Activated CD4-positive, alpha-beta T cell treated with anti-CD3 and anti-CD28 coated beads for 36 hours (primary cell): ENCODE measurements at regions of chr3 and their contacts with region 1.

Region 1: GRCh38 chr3:13461169-13462158 is 18.6 kb upstream of the HDAC11 start:
- DNase-seq: peak; percentile 91
- ATAC-seq: peak; percentile 99
- H3K4me3 Mint-ChIP-seq: no peak overlapping the region
- H3K27ac Mint-ChIP-seq: no peak overlapping the region
- H3K4me1 Mint-ChIP-seq: peaks cover 3% of the 10 kb centered on the region
- H3K27me3 Mint-ChIP-seq: no peaks in the 10 kb centered on the region

Region 2: DNA sequence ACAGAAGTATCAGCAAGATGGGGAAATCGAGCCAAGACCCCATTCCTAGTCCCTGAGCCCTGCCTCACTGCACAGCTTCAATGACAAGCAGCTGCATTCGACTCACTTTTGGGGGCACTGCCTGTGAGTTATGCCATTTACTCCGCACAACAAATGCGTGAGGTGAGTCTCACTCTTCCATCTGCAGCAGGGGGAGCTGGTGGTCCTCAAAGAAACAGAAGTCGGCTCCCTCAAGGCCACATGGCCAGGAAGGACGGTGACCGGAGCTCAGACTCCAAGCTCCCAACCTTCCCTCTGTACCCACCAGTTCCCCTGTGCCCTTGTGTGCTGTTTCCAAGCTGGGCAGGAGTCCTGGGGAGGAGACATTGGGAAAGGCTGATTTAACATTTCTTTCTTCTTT is 260.5 kb before region 1 on chr3:
- CTCF ChIA-PET with region 1: no interaction called
- POLR2A ChIA-PET with region 1: no interaction called
- intact Hi-C with region 1: loop called in 1 of 2 experiments (anchors 1 kb)
- DNase-seq: peak; percentile 14
- ATAC-seq: no peak
- H3K4me3 Mint-ChIP-seq: no peak overlapping the region
- H3K27ac Mint-ChIP-seq: no peak overlapping the region
- H3K4me1 Mint-ChIP-seq: peaks cover 7% of the 10 kb centered on the region
- H3K27me3 Mint-ChIP-seq: peaks cover 28% of the 10 kb centered on the region

Region 3: DNA sequence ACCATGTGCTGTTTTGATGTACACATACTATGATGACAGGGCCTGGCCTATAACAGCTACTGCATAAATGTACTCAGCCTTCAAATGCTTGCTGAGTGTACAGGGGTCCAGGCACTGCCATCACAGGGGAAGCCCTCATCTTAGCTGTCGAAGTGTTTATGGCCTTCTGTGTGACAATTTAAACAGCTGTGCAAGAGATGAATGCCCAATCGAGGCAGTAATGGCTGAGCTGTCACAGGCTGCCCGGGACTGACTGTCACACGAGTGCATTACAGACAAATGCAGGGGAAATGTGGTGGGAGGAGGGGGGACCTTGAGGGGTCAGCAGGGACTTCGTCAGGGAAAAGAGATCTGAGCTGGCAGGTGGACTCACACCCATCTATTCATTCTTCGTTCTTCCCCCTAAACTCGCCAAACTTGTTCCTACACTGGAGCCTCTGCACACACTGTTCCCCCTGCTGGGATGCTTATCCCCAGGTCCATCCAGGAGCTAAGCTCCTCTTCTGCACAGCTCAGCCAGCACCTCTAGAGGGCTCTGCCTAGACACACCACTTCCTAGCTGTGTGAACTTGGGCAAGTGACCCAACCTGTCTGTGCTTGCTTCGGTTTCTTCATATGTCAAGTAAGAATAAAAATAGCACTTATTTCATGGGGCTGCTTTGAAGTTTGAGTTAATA is 232.1 kb before region 1 on chr3:
- CTCF ChIA-PET with region 1: no interaction called
- POLR2A ChIA-PET with region 1: no interaction called
- intact Hi-C with region 1: loop called in 1 of 2 experiments (anchors 1 kb)
- DNase-seq: peak; percentile 36
- ATAC-seq: peak; percentile 80
- H3K4me3 Mint-ChIP-seq: no peak overlapping the region
- H3K27ac Mint-ChIP-seq: no peak overlapping the region
- H3K4me1 Mint-ChIP-seq: peaks cover 9% of the 10 kb centered on the region
- H3K27me3 Mint-ChIP-seq: peaks cover 5% of the 10 kb centered on the region

Region 4: DNA sequence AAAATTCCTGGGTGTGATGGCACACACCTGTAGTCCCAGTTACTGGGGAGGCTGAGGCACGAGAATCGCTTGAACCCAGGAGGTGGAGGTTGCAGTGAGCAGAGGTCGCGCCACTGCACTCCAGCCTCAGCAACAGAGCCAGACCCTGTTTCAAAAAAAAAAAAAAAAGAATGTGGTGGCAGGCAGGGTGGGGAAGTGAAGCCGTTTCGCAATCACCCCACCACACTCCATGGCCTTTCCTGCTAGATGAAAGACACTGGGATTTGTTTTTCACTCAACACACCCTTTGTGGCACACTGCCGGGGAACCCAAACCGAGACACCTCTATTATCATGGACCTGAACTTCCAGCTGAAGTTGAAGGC is 215.9 kb before region 1 on chr3:
- CTCF ChIA-PET with region 1: no interaction called
- POLR2A ChIA-PET with region 1: no interaction called
- intact Hi-C with region 1: no loop called
- DNase-seq: no peak
- ATAC-seq: no peak
- H3K4me3 Mint-ChIP-seq: no peak overlapping the region
- H3K27ac Mint-ChIP-seq: no peak overlapping the region
- H3K4me1 Mint-ChIP-seq: no peaks in the 10 kb centered on the region
- H3K27me3 Mint-ChIP-seq: no peaks in the 10 kb centered on the region

Region 5: GRCh38 chr3:13308380-13308801 is 153.1 kb before region 1 on chr3:
- CTCF ChIA-PET with region 1: interaction called, 3 read pairs
- POLR2A ChIA-PET with region 1: no interaction called
- intact Hi-C with region 1: loop called in 1 of 2 experiments (anchors 2 kb)
- DNase-seq: peak; percentile 48
- ATAC-seq: peak; percentile 67
- H3K4me3 Mint-ChIP-seq: no peak overlapping the region
- H3K27ac Mint-ChIP-seq: no peak overlapping the region
- H3K4me1 Mint-ChIP-seq: no peaks in the 10 kb centered on the region
- H3K27me3 Mint-ChIP-seq: no peaks in the 10 kb centered on the region

Region 6: GRCh38 chr3:13346481-13347389 is 114.7 kb before region 1 on chr3:
- CTCF ChIA-PET with region 1: interaction called, 12 read pairs
- POLR2A ChIA-PET with region 1: no interaction called
- intact Hi-C with region 1: no loop called
- DNase-seq: peak; percentile 89
- ATAC-seq: peak; percentile 90
- H3K4me3 Mint-ChIP-seq: no peak overlapping the region
- H3K27ac Mint-ChIP-seq: peak overlapping the region; percentile 90
- H3K4me1 Mint-ChIP-seq: peaks cover 55% of the 10 kb centered on the region
- H3K27me3 Mint-ChIP-seq: no peaks in the 10 kb centered on the region

Region 7: DNA sequence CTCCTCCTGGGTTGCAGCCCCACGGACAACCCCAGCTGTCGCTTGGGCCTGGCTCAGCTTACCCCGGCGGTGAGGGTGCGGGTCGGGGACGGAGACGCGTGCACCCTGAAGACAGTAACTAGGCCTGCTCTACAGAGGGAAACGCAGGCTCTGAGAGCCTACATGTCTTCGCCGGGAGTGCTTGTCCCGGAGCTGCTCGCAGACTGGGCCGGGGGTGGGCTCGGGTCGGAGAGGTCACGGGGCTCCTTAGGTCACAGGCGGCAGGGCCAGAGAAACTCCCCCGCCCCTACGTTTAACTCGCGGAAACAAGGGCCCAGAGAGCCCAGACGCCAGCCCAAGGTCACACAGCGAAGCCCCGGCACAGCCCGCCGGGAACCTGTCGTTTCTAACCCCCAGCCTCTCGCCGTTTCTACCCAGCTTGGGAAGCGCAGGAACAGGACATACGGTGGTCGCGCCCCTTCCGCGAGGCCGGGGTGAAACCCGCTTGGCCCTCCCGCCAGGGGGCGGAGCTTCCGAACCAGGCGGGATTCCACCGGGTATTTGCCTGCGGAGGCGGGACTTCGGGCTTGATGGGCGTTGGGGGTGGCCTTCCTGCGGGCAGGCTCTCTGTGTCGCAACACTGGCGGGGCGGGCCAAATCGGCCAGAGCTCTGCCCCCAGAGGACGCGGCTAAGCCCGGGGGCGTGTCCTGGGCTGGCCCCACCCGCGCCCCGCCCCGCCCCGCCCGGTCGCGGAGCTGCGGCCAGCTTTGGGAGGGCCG is 18.3 kb after region 1 on chr3 and contains the start of gene HDAC11:
- CTCF ChIA-PET with region 1: interaction called, 10 read pairs
- POLR2A ChIA-PET with region 1: no interaction called
- intact Hi-C with region 1: no loop called
- DNase-seq: peak; percentile 99
- ATAC-seq: peak; percentile 96
- H3K4me3 Mint-ChIP-seq: peak within 1 kb of the TSS; percentile 89
- H3K27ac Mint-ChIP-seq: peak within 1 kb of the TSS; percentile 90
- H3K4me1 Mint-ChIP-seq: peaks cover 20% of the 10 kb centered on the region
- H3K27me3 Mint-ChIP-seq: no peaks in the 10 kb centered on the region
- total RNA-seq, gene HDAC11: 3.4 to 4.1 TPM